Naive thymus-derived CD4-positive, alpha-beta T cell (primary cell): ENCODE measurements at regions of chr17 and their contacts with region 1.

Region 1: DNA sequence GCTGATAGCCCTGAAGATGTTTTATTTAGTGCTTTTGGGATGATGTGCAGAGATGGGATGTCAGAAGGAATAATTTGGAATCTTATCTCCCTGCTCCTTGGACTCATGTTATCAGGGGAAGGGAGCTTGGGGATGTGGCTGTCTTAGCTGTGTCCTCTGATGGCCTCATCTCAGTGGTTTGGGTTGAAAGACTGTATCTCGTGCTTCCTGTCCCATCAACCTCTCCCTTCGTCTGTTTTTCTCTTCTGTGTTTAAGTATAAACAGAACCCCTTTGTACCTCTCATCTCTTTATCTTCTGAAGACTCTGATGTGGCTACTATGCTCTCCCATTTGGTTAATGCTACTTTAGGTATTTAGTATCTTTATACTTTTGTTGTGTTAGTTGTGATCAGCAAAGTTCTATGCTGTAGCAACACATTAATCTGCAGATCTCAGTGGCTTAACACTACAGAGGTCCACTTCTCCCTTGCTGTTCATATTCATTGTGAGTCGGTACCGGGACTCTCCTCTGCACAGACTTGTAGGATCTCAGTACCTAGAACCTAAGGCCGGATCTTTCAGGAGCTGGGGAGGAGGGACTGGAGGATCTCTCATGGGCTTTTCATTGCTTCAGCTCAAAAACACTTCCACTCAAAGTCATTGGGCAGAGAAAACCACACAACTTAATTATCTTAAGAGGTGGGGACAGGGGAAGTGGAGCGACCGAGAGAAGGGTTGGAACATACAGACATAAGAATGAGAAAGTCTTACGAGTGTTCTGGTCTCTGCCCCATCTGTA is 28.8 kb downstream of the PRKCA start:
- DNase-seq: peak in 8 of 9 donors; percentile 32 to 88 (median 76)
- ATAC-seq: peak; percentile 91
- H3K4me3 ChIP-seq: peak overlapping the region; percentile 6
- H3K4me3 Mint-ChIP-seq: peak overlapping the region; percentile 68 to 92 (median 83)
- H3K27ac ChIP-seq: peak overlapping the region; percentile 69
- H3K27ac Mint-ChIP-seq: peak overlapping the region; percentile 88 to 99 (median 95)
- H3K4me1 ChIP-seq: peaks cover 0 to 91% of the 10 kb centered on the region in 2 donors
- H3K4me1 Mint-ChIP-seq: peaks cover 43 to 92% (median 81%) of the 10 kb centered on the region in 7 donors
- H3K27me3 ChIP-seq: no peaks in the 10 kb centered on the region
- H3K27me3 Mint-ChIP-seq: no peaks in the 10 kb centered on the region

Region 2: DNA sequence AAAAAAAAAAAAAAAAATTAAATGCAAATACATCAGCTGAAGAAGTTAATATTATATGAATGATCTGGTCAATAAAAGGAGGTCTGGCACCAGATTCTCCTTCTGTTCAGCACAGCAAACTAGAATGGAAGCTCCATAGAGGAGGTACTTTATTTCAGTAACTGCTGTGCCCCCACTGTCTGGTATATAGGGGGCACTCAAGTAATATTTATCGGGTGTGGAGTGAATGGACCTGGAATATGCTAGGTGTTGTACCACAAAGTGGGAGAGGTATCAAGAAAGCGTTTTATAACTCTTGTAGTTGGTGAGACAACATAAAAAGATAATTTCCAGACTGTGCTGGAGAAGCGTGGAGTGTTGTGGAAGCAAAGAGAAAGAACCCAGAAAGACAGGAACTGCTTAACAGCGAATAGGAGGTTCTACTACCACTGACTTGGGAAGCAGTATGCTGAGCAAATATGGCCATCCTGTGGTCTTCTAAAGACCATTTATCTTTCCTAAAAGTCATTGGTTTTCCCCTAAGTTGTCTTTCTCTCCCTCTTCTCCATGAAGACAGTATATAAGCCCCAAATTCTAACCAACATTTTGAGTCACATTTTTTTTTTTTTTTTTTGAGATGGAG is 41.0 kb before region 1 on chr17:
- CTCF ChIA-PET with region 1: no interaction called
- POLR2A ChIA-PET with region 1: interaction called, 4 read pairs
- intact Hi-C with region 1: loop called in 1 of 2 experiments (anchors 2 kb)
- DNase-seq: no peak
- ATAC-seq: no peak
- H3K4me3 ChIP-seq: no peak overlapping the region
- H3K4me3 Mint-ChIP-seq: peak overlapping the region in 2 of 10 donors; percentile 11 to 59
- H3K27ac ChIP-seq: no peak overlapping the region
- H3K27ac Mint-ChIP-seq: peak overlapping the region in 1 of 9 donors; percentile 63
- H3K4me1 ChIP-seq: peaks cover 6 to 30% of the 10 kb centered on the region in 2 donors
- H3K4me1 Mint-ChIP-seq: peaks cover 18 to 51% (median 34%) of the 10 kb centered on the region in 7 donors
- H3K27me3 ChIP-seq: no peaks in the 10 kb centered on the region
- H3K27me3 Mint-ChIP-seq: no peaks in the 10 kb centered on the region

Region 3: GRCh38 chr17:66317629-66318028 is 13.6 kb before region 1 on chr17:
- CTCF ChIA-PET with region 1: interaction called, 8 read pairs
- POLR2A ChIA-PET with region 1: interaction called, 89 read pairs
- intact Hi-C with region 1: loop called (anchors 1 kb)
- DNase-seq: no peak
- ATAC-seq: no peak
- H3K4me3 ChIP-seq: no peak overlapping the region
- H3K4me3 Mint-ChIP-seq: peak overlapping the region in 5 of 10 donors; percentile 21 to 42 (median 32)
- H3K27ac ChIP-seq: no peak overlapping the region
- H3K27ac Mint-ChIP-seq: peak overlapping the region in 6 of 9 donors; percentile 11 to 84 (median 62)
- H3K4me1 ChIP-seq: peaks cover 4 to 29% of the 10 kb centered on the region in 2 donors
- H3K4me1 Mint-ChIP-seq: peaks cover 30 to 73% (median 60%) of the 10 kb centered on the region in 7 donors
- H3K27me3 ChIP-seq: no peaks in the 10 kb centered on the region
- H3K27me3 Mint-ChIP-seq: no peaks in the 10 kb centered on the region

Region 4: DNA sequence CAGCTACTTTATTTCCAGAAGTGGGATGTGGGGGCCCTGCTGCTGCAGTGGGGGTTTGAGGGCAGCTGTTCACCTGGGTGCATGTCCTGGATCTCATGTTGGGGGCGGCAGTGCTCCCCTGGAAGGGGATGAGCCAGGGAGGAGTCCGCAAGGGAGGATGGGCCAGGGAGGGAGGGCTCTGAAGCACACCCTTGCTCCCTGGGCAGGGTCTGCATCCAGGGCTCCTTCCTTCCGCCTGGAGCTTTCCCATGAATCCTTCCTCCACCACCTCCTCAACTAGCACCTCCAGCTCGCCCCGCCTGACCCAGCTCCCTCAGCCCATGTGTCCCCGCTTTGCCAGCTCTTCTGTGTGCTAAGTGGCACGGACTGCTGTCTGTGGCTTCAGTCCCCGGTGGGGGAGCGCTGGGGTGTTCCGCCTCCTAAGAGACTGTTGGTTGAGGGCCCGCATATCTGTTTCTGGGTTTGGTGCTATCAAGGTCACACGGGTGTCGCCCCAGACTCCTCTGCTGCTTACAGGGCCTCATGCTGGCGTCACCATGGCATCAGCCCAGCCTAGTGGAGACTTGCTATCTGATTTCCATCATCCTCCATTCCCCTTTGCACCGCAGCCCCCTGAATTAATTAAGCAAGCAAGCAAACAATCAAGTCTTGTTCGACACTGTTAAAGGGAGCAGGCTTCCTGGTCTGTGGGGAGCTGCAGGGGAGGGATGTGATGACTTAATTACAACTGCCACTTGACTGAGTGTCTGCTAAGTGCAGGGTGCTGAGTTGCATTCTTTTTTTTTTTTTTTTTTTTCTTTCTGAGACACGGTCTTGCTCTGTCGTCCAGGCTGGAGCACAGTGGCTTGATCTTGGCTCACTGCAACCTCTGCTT is 43.0 kb after region 1 on chr17:
- CTCF ChIA-PET with region 1: interaction called, 4 read pairs
- POLR2A ChIA-PET with region 1: interaction called, 4 read pairs
- intact Hi-C with region 1: loop called in 1 of 2 experiments (anchors 5 kb)
- DNase-seq: peak in 7 of 9 donors; percentile 12 to 77 (median 45)
- ATAC-seq: peak; percentile 91
- H3K4me3 ChIP-seq: no peak overlapping the region
- H3K4me3 Mint-ChIP-seq: peak overlapping the region; percentile 19 to 66 (median 56)
- H3K27ac ChIP-seq: peak overlapping the region; percentile 20
- H3K27ac Mint-ChIP-seq: peak overlapping the region; percentile 74 to 87 (median 82)
- H3K4me1 ChIP-seq: peaks cover 12 to 29% of the 10 kb centered on the region in 2 donors
- H3K4me1 Mint-ChIP-seq: peaks cover 23 to 84% (median 75%) of the 10 kb centered on the region in 7 donors
- H3K27me3 ChIP-seq: no peaks in the 10 kb centered on the region
- H3K27me3 Mint-ChIP-seq: no peaks in the 10 kb centered on the region